Activated CD4-positive, alpha-beta memory T cell treated with anti-CD3 and anti-CD28 coated beads, Interleukin-2, amount 10 ng/mL, durations not matched to agents 7 days and 5 days (primary cell): ENCODE measurements at regions of chr6 and their contacts with region 1.

Region 1: DNA sequence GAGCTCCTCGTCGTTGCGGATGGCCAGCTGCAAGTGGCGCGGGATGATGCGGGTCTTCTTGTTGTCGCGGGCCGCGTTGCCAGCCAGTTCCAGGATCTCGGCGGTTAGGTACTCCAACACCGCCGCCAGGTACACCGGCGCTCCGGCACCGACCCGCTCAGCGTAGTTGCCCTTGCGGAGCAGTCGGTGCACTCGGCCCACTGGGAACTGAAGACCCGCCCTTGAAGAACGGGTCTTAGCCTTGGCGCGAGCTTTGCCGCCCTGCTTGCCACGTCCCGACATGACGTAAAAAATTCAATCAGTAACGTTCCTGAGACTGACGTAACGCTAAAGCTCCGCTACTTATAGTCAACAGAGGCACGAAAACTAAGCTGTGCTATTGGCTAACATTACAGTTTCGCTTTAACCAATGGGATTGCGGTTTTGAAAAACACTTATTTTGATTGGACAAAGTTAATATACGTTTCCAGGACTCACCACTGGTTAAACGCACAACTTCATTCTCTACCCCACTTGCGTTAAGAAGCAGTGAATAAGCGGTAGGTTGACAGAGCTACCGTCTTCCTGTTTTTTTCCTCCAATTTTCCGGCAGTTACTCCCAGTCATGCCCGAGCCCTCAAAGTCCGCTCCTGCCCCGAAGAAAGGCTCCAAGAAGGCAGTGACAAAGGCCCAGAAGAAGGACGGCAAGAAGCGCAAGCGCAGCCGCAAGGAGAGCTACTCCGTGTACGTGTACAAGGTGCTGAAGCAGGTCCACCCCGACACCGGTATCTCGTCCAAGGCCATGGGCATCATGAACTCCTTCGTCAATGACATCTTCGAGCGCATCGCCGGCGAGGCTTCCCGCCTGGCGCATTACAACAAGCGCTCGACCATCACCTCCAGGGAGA is 73.9 kb downstream of the OR2B2 start:
- DNase-seq: peak; percentile 90
- H3K4me3 Mint-ChIP-seq: no peak overlapping the region
- H3K27ac Mint-ChIP-seq: no peak overlapping the region
- H3K4me1 Mint-ChIP-seq: peaks cover 31% of the 10 kb centered on the region
- H3K27me3 Mint-ChIP-seq: no peaks in the 10 kb centered on the region

Region 2: GRCh38 chr6:26031595-26032339 is 1806.5 kb before region 1 on chr6:
- CTCF ChIA-PET with region 1: no interaction called
- POLR2A ChIA-PET with region 1: interaction called, 34 read pairs
- DNase-seq: peak; percentile 92
- H3K4me3 Mint-ChIP-seq: peak overlapping the region; percentile 84
- H3K27ac Mint-ChIP-seq: peak overlapping the region; percentile 100
- H3K4me1 Mint-ChIP-seq: peaks cover 74% of the 10 kb centered on the region
- H3K27me3 Mint-ChIP-seq: peaks cover 4% of the 10 kb centered on the region

Region 3: GRCh38 chr6:26249957-26250697 is 1588.2 kb before region 1 on chr6:
- CTCF ChIA-PET with region 1: no interaction called
- POLR2A ChIA-PET with region 1: interaction called, 14 read pairs
- DNase-seq: peak; percentile 84
- H3K4me3 Mint-ChIP-seq: peak overlapping the region; percentile 90
- H3K27ac Mint-ChIP-seq: peak overlapping the region; percentile 93
- H3K4me1 Mint-ChIP-seq: peaks cover 42% of the 10 kb centered on the region
- H3K27me3 Mint-ChIP-seq: no peaks in the 10 kb centered on the region

Region 4: DNA sequence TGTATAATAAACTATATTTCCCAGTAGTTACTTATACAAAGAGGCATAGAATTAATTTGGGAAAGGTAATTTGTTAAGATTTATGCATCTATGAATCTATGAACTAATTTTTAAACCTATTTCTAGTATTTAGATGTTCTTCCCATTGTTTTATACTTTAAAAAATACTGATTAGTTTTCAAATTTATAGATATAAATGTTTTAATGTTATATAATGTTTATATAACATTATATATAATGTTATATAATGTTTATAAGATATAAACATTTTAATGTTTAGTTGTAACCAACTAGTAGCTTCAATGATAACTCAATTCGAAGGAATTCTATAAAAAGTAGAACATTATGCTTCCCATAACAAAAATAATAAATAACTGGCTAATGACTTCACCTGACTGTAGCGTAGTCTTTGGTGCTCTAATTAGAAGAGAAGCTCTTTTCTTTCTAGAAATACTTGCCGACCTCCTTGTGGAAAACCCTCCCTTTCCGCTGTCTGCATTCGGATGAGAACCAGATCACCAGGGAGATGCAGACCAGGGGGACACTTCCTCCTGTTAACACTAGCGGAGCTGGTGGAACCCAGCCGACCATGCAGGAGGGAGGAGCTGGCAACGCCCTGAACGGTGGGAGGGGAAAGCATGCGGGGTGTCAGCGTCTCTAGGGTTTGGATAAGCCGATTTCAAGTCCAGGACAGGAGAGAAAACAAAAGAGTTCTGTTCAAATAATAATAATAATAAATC is 84.5 kb before region 1 on chr6:
- CTCF ChIA-PET with region 1: no interaction called
- POLR2A ChIA-PET with region 1: interaction called, 14 read pairs
- DNase-seq: peak; percentile 80
- H3K4me3 Mint-ChIP-seq: peak overlapping the region; percentile 73
- H3K27ac Mint-ChIP-seq: peak overlapping the region; percentile 100
- H3K4me1 Mint-ChIP-seq: peaks cover 48% of the 10 kb centered on the region
- H3K27me3 Mint-ChIP-seq: peaks cover 5% of the 10 kb centered on the region

Region 5: DNA sequence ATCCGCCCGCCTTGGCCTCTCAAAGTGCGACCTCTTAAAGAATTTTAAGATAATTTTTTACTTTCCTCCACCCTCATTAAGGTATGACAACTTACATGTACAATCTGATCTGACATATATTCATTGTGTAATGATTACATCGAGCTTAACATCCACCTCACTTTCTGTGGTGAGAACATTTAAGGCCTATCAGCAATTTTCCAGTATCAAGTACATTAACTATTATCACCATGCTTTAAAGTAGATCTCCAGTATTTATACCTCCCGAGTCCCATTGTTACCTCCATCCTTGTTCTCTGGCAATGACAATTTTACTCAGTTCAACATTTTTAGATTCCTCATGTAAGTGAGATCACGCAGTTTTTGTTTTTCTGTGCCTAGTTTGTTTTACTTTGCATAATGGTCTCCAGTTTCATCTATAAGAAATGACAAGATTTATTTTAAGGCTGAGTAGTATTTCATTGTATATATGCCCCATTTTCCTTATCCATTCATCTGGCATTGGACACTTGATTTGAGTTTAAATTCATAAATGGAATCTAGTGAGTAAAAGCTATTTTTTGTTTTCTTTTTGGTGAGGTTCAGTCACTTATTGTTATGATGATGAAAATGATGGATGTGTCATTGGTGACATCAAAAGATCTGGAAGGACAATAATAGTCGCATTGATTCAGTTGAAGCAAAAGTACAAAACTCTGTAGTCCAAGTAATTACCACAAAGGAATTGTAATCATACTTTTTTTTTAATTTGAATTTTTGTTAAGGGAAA is 13.1 kb before region 1 on chr6:
- CTCF ChIA-PET with region 1: interaction called, 34 read pairs
- POLR2A ChIA-PET with region 1: interaction called, 478 read pairs
- DNase-seq: no peak
- H3K4me3 Mint-ChIP-seq: peak overlapping the region; percentile 82
- H3K27ac Mint-ChIP-seq: peak overlapping the region; percentile 99
- H3K4me1 Mint-ChIP-seq: peaks cover 51% of the 10 kb centered on the region
- H3K27me3 Mint-ChIP-seq: no peaks in the 10 kb centered on the region

Region 6: GRCh38 chr6:27957516-27957915 is 119.2 kb after region 1 on chr6:
- CTCF ChIA-PET with region 1: no interaction called
- POLR2A ChIA-PET with region 1: no interaction called
- DNase-seq: no peak
- H3K4me3 Mint-ChIP-seq: no peak overlapping the region
- H3K27ac Mint-ChIP-seq: no peak overlapping the region
- H3K4me1 Mint-ChIP-seq: no peaks in the 10 kb centered on the region
- H3K27me3 Mint-ChIP-seq: peaks cover 30% of the 10 kb centered on the region